ENCODE measurements at regions of chr2 and their contacts with region 1.

Region 1: GRCh38 chr2:32951672-32952071 is 4.9 kb downstream of the LTBP1 start:
- DNase-seq: no peak

Region 2: GRCh38 chr2:32965523-32966171 is 14.0 kb after region 1 on chr2:
- intact Hi-C with region 1: loop called in 1 of 2 experiments (anchors 1 kb)
- DNase-seq: no peak

Region 3: GRCh38 chr2:32997705-32998104 is 46.0 kb after region 1 on chr2:
- intact Hi-C with region 1: loop called in 1 of 2 experiments (anchors 2 kb)
- DNase-seq: no peak

Region 4: DNA sequence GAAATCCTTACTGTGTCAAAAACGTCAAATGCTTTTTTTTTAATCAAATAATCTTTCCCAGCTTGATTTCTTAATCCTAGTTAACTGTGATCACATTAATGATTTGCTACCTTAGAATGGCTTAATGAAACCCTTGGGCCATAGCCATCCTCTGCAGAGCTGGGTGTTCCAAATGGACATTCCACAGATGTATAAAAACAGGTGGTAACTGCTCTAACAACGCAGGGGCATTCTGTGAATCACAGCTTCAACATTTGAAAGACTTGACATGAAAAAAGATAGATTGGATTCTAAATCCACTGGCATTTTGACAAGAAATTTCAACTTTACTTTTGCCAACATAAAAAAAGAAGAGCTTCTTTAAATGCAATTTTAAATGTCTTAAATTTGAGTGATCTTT is 454.9 kb after region 1 on chr2:
- intact Hi-C with region 1: no loop called
- DNase-seq: no peak